Posterior vena cava (tissue), 2 donors: ENCODE measurements at regions of chr5 and their contacts with region 1.

Region 1: GRCh38 chr5:573976-574375 is 38.2 kb upstream of the CEP72 start:
- DNase-seq: peak; percentile 55

Region 2: GRCh38 chr5:606061-606897 is 32.3 kb after region 1 on chr5:
- intact Hi-C with region 1: loop called in 1 of 2 experiments (anchors 1 kb)
- DNase-seq: peak; percentile 65